ENCODE measurements at regions of chr13 and their contacts with region 1.

Region 1: DNA sequence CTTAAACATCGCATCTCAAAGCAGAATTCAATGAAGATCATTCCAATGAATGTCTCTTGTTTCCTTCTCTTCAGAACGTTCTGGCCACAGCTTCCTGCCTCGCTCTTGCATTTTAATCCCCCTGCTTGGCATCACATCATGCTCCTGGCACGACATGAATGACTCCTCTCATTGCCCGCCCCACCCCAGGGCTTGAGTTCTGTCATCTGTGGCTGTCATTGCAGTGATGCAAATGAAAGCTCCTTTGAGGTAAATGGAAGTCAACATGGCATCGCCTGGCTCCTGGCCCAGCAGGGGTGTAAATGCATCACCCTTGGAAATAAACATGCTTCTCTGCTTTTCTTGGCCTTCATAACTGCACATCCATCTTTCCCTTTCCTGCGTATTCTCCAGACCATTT is 48.6 kb downstream of the SCEL start:
- DNase-seq: no peak
- ATAC-seq: no peak
- H3K4me3 ChIP-seq: no peak overlapping the region
- H3K27ac ChIP-seq: no peak overlapping the region
- H3K4me1 ChIP-seq: no peaks in the 10 kb centered on the region
- H3K27me3 ChIP-seq: no peaks in the 10 kb centered on the region
- CTCF ChIP-seq: no peak
- POLR2A ChIP-seq: no peak

Region 2: DNA sequence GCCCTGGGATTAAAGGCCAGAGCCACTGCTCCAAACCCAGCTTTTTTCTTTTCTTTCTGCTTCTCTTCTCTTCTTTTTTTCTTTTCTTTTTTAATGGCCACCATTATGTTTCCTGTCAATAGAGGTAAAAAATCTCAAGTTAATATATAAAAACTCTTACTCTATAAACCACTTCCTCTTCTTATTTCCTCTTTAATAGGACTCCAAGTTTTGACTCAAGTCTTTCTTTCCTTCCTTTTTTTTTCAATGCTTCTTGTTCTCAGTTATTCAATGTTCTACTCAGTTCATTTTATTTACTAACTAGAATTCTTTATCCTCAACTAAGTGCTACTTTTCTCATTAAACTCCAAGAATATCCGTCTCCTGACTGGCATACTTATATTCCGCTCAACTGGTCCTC is 230.1 kb before region 1 on chr13:
- intact Hi-C with region 1: no loop called
- DNase-seq: no peak
- ATAC-seq: no peak
- H3K4me3 ChIP-seq: no peak overlapping the region
- H3K27ac ChIP-seq: no peak overlapping the region
- H3K4me1 ChIP-seq: peaks cover 0 to 12% (median 2%) of the 10 kb centered on the region in 4 donors
- H3K27me3 ChIP-seq: no peaks in the 10 kb centered on the region
- CTCF ChIP-seq: no peak
- POLR2A ChIP-seq: no peak

Region 3: DNA sequence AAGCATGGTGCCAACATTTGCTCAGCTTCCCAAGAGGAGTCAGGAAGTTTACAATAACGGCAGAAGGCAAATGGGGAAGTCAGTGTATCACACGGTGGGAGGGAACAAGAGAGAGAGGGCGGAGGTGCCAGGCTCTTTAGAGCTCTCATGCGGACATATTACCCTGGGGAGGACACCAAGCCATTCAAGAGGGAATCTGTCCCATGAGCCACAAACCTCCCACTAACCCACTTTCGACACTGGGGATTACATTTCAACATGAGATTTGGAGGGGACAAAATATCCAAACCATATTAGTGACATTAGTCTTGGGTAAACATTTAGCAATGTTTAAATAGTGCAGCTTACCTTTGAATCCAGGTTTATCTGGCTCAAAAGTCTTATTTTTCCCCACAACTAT is 183.3 kb after region 1 on chr13:
- intact Hi-C with region 1: loop called in 1 of 2 experiments (anchors 10 kb)
- DNase-seq: peak in 1 of 3 donors; percentile 65
- ATAC-seq: peak; percentile 94 to 95 (median 94)
- H3K4me3 ChIP-seq: no peak overlapping the region
- H3K27ac ChIP-seq: peak overlapping the region in 2 of 3 donors; percentile 29 to 71
- H3K4me1 ChIP-seq: peaks cover 0 to 16% (median 5%) of the 10 kb centered on the region in 4 donors
- H3K27me3 ChIP-seq: no peaks in the 10 kb centered on the region
- CTCF ChIP-seq: no peak
- POLR2A ChIP-seq: no peak